ENCODE measurements at regions of chr12 and their contacts with region 1.

Region 1: GRCh38 chr12:49580572-49581535 is 12.9 kb upstream of the MCRS1 start:
- DNase-seq: peak in 4 of 5 donors; percentile 76 to 83 (median 80)
- ATAC-seq: peak; percentile 68 to 80 (median 79)
- H3K4me3 ChIP-seq: no peak overlapping the region
- H3K27ac ChIP-seq: peak overlapping the region in 9 of 12 donors; percentile 16 to 77 (median 36)
- H3K4me1 ChIP-seq: peaks cover 0 to 57% (median 30%) of the 10 kb centered on the region in 12 donors
- H3K27me3 ChIP-seq: no peaks in the 10 kb centered on the region
- CTCF ChIP-seq: peak; percentile 67 to 88 (median 79)
- POLR2A ChIP-seq: no peak

Region 2: GRCh38 chr12:49358483-49359141 is 222.2 kb before region 1 on chr12:
- intact Hi-C with region 1: loop called in 8 of 10 experiments (anchors 2 to 10 kb)
- DNase-seq: peak in 1 of 5 donors; percentile 54
- ATAC-seq: peak; percentile 69 to 88 (median 85)
- H3K4me3 ChIP-seq: no peak overlapping the region
- H3K27ac ChIP-seq: no peak overlapping the region
- H3K4me1 ChIP-seq: peaks cover 0 to 8% (median 0%) of the 10 kb centered on the region in 12 donors
- H3K27me3 ChIP-seq: peaks cover 0 to 9% (median 2%) of the 10 kb centered on the region in 9 donors
- CTCF ChIP-seq: peak; percentile 73 to 90 (median 81)
- POLR2A ChIP-seq: no peak

Region 3: DNA sequence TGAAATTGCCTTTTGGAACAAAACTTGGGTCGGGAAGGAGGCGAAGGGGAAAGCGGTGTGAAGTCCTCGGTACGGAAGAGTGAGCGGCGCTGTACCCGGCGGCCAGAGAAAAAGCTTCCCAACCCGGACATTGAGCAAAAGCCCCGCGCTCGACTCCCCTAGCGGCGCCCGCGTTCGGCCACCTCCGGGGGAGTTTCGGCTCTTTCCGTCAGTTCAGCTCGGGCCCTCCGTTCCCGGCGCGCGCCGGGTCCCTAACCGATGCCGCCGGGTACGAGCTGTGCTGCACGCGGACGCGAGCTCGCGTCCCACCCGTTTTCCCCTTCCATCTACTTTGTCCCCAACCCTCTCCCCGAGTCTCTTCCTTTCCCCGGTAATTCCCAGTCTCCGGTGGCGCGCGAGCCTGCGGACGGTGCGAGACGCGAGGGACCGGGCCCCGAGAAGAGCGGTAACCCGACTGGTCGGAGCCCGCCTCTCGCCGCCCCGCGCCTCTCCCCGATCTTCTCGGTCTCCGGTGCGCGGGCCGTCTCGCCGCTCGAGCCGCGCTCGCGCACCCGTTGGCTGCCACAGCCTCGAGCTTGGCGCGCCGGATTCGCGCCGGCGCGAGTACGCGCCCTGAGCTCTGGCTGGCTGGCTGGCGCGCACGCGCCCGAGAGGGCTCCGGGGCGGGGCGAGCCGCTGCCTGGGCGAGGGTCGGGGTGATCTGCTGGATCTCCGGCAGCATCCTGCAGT is 214.0 kb before region 1 on chr12:
- intact Hi-C with region 1: loop called in 2 of 10 experiments (anchors 5 to 10 kb)
- DNase-seq: peak; percentile 88 to 95 (median 91)
- ATAC-seq: peak; percentile 84 to 95 (median 94)
- H3K4me3 ChIP-seq: peak overlapping the region; percentile 50 to 97 (median 88)
- H3K27ac ChIP-seq: peak overlapping the region; percentile 31 to 99 (median 96)
- H3K4me1 ChIP-seq: peaks cover 3 to 47% (median 25%) of the 10 kb centered on the region in 12 donors
- H3K27me3 ChIP-seq: no peaks in the 10 kb centered on the region
- CTCF ChIP-seq: peak in 8 of 12 donors; percentile 14 to 52 (median 40)
- POLR2A ChIP-seq: peak; percentile 11 to 64

Region 4: DNA sequence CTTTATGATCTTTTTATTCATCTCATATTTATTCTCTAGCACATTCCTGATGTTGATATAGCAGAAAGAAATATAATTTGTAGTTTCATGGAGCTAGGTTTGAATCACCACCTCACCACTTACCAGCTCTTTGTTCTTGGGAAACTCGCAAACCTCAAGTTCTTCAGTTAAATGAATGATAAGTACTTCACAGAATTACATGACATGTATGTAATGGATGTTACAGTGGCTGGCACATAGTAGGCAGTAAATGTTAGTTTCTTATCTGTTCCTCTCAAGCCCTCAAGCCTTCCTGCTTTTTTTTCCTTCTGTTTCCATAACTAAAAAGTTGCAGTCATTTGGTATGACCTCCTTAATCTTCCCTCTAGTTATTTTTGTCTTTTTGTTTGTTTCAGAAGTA is 158.7 kb before region 1 on chr12:
- intact Hi-C with region 1: no loop called
- DNase-seq: no peak
- ATAC-seq: no peak
- H3K4me3 ChIP-seq: no peak overlapping the region
- H3K27ac ChIP-seq: no peak overlapping the region
- H3K4me1 ChIP-seq: peaks cover 0 to 12% (median 5%) of the 10 kb centered on the region in 12 donors
- H3K27me3 ChIP-seq: no peaks in the 10 kb centered on the region
- CTCF ChIP-seq: no peak
- POLR2A ChIP-seq: no peak

Region 5: GRCh38 chr12:49553512-49554088 is 27.3 kb before region 1 on chr12:
- intact Hi-C with region 1: loop called in 2 of 10 experiments (anchors 1 to 5 kb)
- DNase-seq: peak in 1 of 5 donors; percentile 3
- ATAC-seq: peak in 1 of 4 donors; percentile 10
- H3K4me3 ChIP-seq: no peak overlapping the region
- H3K27ac ChIP-seq: no peak overlapping the region
- H3K4me1 ChIP-seq: peaks cover 0 to 26% (median 15%) of the 10 kb centered on the region in 12 donors
- H3K27me3 ChIP-seq: peaks cover 0 to 13% (median 0%) of the 10 kb centered on the region in 9 donors
- CTCF ChIP-seq: peak in 9 of 12 donors; percentile 4 to 49 (median 30)
- POLR2A ChIP-seq: no peak

Region 6: GRCh38 chr12:49623142-49623904 is 42.5 kb after region 1 on chr12 and contains the start of gene PRPF40B:
- intact Hi-C with region 1: loop called in 3 of 10 experiments (anchors 2 to 5 kb)
- DNase-seq: peak; percentile 90 to 93 (median 91)
- ATAC-seq: peak; percentile 86 to 91 (median 90)
- H3K4me3 ChIP-seq: peak within 1 kb of the TSS; percentile 38 to 75 (median 64)
- H3K27ac ChIP-seq: peak within 1 kb of the TSS; percentile 43 to 94 (median 84)
- H3K4me1 ChIP-seq: peaks cover 0 to 25% (median 16%) of the 10 kb centered on the region in 12 donors
- H3K27me3 ChIP-seq: peaks cover 0 to 7% (median 0%) of the 10 kb centered on the region in 9 donors
- CTCF ChIP-seq: peak; percentile 22 to 65 (median 44)
- POLR2A ChIP-seq: peak; percentile 63 to 93
- total RNA-seq, gene PRPF40B: 12.7 to 25.5 (median 20.9) TPM

Measured in heart left ventricle (tissue), 16 donors.